Ovary (tissue), 10 donors: ENCODE measurements at regions of chr11 and their contacts with region 1.

Region 1: DNA sequence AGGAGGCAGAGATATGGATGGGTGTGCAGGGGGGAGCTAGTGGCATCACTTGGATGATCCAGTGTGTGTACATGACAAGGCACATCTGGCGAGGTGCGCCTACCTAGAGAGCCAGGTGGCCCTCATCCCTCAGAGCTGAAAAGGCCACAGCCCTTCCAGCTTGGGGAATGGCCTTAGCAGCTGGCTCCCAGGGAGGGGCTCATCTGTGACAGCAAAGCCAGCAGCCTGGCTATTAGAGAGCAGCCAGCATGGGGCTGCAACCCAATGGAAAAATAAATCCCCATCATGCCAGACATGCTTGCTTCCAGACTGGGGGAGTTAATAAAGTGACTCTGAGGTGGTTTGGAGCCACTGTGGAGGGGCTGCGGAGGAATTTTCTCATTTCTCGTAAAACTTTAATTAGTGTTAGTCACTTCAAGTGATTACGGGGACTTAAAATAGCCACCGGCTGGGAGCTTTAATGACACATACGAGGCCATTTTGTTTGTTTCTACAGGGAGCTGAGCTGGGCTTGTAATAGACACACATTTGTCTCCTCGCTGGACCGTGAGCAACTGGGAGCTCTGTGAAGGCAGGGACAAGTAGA is 111.2 kb upstream of the ALX4 start:
- DNase-seq: no peak
- H3K4me3 ChIP-seq: no peak overlapping the region
- H3K27ac ChIP-seq: no peak overlapping the region
- H3K4me1 ChIP-seq: no peaks in the 10 kb centered on the region
- H3K27me3 ChIP-seq: no peaks in the 10 kb centered on the region
- CTCF ChIP-seq: no peak
- EP300 ChIP-seq: no peak
- POLR2A ChIP-seq: no peak

Region 2: GRCh38 chr11:44203270-44204043 is 217.7 kb before region 1 on chr11:
- intact Hi-C with region 1: no loop called
- DNase-seq: no peak
- H3K4me3 ChIP-seq: no peak overlapping the region
- H3K27ac ChIP-seq: no peak overlapping the region
- H3K4me1 ChIP-seq: no peaks in the 10 kb centered on the region
- H3K27me3 ChIP-seq: no peaks in the 10 kb centered on the region
- CTCF ChIP-seq: no peak
- EP300 ChIP-seq: no peak
- POLR2A ChIP-seq: no peak

Region 3: DNA sequence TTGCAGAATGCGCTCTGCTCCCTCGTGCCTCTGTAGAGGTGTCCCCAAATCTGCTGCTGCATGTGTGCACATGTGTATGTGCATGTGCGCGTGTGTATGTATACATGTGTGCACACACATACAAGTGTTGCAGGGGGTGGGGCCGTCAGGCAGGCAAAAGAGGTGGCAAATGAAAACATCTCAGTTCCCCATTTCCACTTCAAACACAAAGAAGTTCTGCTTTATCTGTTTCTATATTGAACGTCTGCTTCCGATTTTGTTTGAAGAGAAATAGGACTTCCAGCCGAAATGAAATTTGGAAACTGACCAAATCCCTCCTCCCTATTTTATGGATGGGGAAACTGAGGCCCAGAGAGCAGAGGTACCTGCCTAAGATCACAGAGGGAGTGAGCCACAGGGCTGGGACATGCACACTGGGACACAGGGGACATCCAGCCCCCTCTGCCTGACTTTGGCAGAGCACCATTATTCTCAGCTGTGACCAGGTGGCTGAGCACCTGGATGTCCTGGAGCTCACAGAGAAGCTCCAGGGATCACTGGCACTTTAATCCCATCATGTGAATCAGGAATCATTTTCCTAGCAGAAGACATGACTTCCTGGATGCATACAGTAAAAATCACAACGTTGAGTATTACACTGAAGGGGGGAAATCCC is 70.0 kb before region 1 on chr11:
- intact Hi-C with region 1: loop called in 1 of 4 experiments (anchors 5 kb)
- DNase-seq: no peak
- H3K4me3 ChIP-seq: no peak overlapping the region
- H3K27ac ChIP-seq: no peak overlapping the region
- H3K4me1 ChIP-seq: no peaks in the 10 kb centered on the region
- H3K27me3 ChIP-seq: no peaks in the 10 kb centered on the region
- CTCF ChIP-seq: no peak
- EP300 ChIP-seq: no peak
- POLR2A ChIP-seq: no peak

Region 4: DNA sequence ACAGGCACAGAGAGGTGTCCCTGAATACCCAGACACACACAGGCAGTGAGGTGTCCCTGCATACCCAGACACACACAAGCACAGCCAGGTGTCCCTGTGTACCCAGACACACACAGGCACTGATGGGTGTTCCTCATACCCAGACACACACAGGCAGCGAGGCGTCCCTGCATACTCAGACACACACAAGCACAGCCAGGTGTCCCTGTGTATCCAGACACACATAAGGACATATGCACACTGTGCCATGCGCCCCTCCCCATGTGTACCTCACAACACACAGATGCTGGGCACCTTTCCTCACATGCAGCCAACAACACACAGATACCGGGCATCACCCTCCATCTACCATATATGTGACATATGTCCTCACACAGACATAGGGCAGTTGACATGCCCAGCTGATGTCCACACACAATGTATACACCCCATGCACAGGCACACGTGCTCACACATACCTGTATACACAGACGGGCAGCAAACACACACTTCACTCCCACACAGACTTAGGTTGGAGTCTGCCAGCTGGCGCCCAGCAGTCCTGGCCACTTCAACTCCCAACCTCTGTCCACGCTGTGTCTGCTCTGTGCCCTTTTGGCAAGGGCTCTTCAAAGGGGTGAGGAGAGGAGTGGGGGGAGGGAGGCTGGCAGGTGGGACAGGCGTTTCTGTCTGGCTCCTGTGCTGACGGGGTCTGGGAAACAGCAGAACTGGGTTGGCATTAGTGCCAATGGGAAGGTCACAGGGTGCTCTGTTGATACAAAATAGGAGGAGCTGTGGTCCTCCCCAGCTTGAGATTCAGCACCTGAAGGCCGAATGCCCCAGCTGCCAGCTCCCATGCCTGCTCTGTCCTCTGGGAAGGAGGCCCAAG is 41.8 kb before region 1 on chr11:
- intact Hi-C with region 1: no loop called
- DNase-seq: no peak
- H3K4me3 ChIP-seq: no peak overlapping the region
- H3K27ac ChIP-seq: no peak overlapping the region
- H3K4me1 ChIP-seq: no peaks in the 10 kb centered on the region
- H3K27me3 ChIP-seq: no peaks in the 10 kb centered on the region
- CTCF ChIP-seq: no peak
- EP300 ChIP-seq: no peak
- POLR2A ChIP-seq: no peak

Region 5: GRCh38 chr11:46295312-46296058 is 1874.3 kb after region 1 on chr11:
- intact Hi-C with region 1: no loop called
- DNase-seq: peak; percentile 80 to 87 (median 84)
- H3K4me3 ChIP-seq: peak overlapping the region; percentile 53
- H3K27ac ChIP-seq: peak overlapping the region; percentile 15 to 51
- H3K4me1 ChIP-seq: peaks cover 21% of the 10 kb centered on the region
- H3K27me3 ChIP-seq: no peaks in the 10 kb centered on the region
- CTCF ChIP-seq: no peak
- EP300 ChIP-seq: no peak
- POLR2A ChIP-seq: no peak